ENCODE measurements at regions of chr6 and their contacts with region 1.

Region 1: GRCh38 chr6:155693573-155694421 is 238.2 kb upstream of the NOX3 start:
- DNase-seq: no peak
- H3K27ac ChIP-seq: no peak overlapping the region
- CTCF ChIP-seq: no peak

Region 2: GRCh38 chr6:155245831-155246230 is 448.0 kb before region 1 on chr6:
- CTCF ChIA-PET with region 1: no interaction called
- POLR2A ChIA-PET with region 1: no interaction called
- DNase-seq: no peak
- H3K27ac ChIP-seq: no peak overlapping the region
- CTCF ChIP-seq: no peak

Region 3: GRCh38 chr6:155706341-155706740 is 12.5 kb after region 1 on chr6:
- CTCF ChIA-PET with region 1: no interaction called
- POLR2A ChIA-PET with region 1: interaction called, 12 read pairs
- DNase-seq: no peak
- H3K27ac ChIP-seq: no peak overlapping the region
- CTCF ChIP-seq: no peak